BJ (cell line): ENCODE measurements at regions of chr2 and their contacts with region 1.

Region 1: DNA sequence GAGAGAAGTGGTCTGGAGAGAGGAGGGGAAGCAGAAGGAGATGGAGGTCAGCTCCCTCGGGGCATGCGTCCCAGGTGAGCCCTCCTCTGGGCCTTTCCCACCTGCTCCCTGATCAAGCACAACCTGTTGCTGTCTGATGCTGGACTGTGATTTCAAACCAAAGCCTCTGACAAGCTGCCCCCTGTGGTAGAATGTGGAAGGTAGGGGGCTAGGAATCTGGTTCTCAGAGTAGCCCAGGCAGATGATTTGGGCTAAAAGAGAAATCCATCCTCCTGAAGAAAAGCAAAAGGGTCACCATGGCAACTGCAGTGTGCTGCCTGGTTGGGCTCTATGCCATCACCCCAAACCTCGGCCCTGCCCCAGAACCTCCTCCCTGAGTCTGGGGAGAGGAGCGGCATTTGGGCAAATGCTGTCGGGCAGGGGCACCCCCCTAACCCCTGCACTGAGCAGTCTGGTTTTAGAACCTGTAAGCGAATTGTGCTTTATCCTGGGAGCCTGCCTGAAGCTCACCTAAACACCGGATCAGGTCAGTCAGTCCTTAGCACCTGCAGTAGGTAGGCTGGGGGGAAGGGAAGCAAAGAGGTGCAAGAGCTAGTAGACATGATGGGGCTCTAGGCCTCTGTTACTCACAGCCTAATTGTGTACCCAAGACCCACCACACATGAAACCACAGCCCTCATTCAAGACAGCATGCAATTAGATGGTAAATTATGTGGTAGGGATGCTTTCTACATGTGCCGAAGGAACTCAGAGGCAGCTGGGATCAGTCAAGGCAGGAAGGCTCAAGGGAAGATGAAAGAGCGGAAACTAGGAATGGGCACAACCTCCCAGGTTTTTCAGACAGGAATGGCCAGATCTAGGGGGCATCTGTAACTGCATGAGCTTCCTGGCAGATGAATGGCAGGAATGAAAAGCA is 83.5 kb downstream of the DNMT3A start:
- DNase-seq: no peak
- H3K4me3 ChIP-seq: no peak overlapping the region
- H3K27me3 ChIP-seq: no peaks in the 10 kb centered on the region
- CTCF ChIP-seq: no peak

Region 2: DNA sequence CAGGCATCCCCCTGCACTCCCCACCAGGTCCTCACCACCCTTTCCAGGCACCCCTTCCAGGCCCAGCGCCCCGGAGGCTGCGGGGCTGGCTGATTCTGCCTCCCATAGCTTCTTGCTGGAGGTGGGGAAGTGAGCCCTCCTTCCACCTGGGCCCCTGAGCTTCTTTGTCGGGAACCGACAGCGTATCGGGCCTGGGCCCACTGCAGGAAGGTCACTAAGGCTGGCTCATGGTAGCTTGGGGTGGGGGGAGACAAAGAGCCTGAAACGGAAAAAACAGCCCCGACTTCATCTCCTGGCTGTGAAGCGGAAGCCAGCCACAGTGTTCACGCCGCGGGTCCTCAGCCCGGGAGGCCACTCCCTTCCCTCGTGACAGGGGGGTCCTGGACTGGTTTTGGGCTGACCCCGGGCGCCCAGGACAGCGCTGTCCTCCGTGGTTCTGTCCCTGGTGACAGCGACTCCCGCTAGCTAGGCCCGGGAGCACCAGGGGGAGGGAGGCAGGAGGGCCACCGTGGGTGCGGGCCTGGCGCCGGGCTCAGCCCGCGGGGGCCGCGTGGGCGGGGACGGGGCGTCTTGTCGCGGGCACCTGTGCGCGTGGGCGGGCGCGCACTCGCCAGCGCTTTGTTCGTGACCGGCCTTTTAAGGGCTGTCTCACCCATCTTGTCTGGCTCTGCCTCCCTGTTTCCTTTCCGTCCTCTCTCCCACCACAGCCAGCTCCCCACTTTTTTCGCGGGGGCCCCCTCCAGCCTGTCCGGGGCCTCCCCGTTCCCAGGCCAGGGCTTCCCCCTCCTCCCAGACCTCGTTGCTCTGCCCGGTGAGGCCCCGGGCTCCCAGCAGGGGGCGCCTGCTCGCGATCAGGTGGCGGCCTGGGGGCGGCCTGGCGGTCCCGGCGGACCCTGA is 18.6 kb after region 1 on chr2:
- CTCF ChIA-PET with region 1: interaction called, 10 read pairs
- POLR2A ChIA-PET with region 1: no interaction called
- DNase-seq: no peak
- H3K4me3 ChIP-seq: no peak overlapping the region
- H3K27me3 ChIP-seq: no peaks in the 10 kb centered on the region
- CTCF ChIP-seq: peak; percentile 61